SK-N-SH (cell line): ENCODE measurements at regions of chr3 and their contacts with region 1.

Region 1: DNA sequence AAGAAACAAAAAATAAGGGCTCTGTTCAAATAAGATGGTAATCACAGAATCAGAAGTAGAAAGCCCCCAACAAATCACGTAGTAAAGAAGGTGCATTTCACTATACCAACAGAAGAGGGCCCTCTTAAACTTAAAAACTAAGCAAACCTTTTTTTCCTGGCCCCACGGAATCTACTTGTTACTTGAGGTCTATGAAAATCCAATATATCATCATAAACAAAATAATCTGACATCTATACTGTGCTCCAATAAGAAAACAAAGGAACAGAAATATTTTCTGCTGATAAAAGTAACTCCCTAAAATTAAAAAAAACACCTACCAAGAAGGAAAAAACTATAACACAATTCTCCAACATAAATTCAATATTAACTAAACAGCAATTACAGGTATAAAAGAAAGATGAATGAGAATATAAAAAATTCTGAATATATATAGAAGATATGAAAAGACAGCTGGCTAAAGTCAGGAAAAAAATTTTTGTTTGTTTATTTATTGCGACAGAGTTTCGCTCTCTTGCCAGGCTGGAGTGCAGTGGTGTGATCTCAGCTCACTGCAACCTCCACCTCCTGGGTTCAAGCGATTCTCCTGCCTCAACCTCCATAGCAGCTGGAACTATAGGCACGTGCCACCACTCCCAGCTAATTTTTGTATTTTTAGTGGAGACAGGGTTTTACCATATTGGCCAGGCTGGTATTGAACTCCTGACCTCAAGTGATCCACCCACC is 81.8 kb downstream of the CLASP2 start:
- DNase-seq: peak; percentile 49
- H3K4me3 ChIP-seq: no peak overlapping the region
- H3K27ac ChIP-seq: no peak overlapping the region
- H3K4me1 ChIP-seq: no peaks in the 10 kb centered on the region
- H3K27me3 ChIP-seq: no peaks in the 10 kb centered on the region
- CTCF ChIP-seq: peak; percentile 83
- EP300 ChIP-seq: no peak
- RAD21 ChIP-seq: peak; percentile 89

Region 2: GRCh38 chr3:33299395-33300081 is 336.8 kb before region 1 on chr3:
- CTCF ChIA-PET with region 1: no interaction called
- POLR2A ChIA-PET with region 1: no interaction called
- DNase-seq: no peak
- H3K4me3 ChIP-seq: no peak overlapping the region
- H3K27ac ChIP-seq: peak overlapping the region; percentile 55 to 89; a peak in 3 of 4 replicates
- H3K4me1 ChIP-seq: peaks cover 0 to 11% of the 10 kb centered on the region in 2 experiments; a peak in 1 of 4 replicates
- H3K27me3 ChIP-seq: no peaks in the 10 kb centered on the region
- CTCF ChIP-seq: 0 out of 2 replicates have a peak, but pooled peaks have one; percentile 20
- EP300 ChIP-seq: 0 out of 4 replicates have a peak, but pooled peaks of 1 of the 2 experiments have one; percentile 6
- RAD21 ChIP-seq: no peak

Region 3: DNA sequence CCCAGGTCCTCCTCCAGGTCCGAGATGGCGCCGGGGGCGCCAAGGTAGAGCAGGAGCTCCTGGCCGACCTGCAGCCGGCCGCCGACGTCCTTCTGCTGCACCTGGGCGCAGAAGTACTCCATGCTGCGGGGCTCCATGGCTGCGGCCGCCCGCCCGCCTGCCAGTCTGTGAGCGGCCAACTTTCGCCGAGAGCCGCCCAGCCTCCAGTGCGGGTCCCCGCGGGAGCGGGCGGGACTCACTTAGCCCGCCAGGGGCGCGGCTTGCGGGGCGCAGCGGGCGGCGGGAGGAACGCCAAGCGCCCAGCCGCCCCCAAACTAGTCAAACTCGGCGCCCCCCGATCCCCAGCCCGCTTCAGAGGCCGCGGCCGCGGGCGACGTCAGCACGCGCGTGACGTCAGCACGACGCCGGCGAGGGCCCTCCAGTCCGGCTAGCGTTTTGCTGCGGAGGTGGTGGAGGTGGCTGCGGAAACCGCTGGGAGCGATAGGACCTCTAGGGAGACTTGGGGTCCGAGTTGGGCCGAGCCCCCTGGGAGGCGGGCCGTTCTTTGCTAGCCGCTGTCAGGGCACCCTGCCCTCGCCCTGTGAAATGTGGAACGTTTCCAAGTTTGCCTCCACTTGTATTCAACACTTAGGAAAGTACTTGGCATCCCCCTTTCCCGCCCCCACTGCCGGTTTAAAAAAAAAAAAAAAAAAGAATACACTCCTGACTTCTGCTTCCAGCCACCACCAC is 81.7 kb after region 1 on chr3 and contains the start of gene CLASP2:
- CTCF ChIA-PET with region 1: interaction called, 38 read pairs
- POLR2A ChIA-PET with region 1: no interaction called
- DNase-seq: peak; percentile 92
- H3K4me3 ChIP-seq: peak within 1 kb of the TSS; percentile 85 to 92
- H3K27ac ChIP-seq: peak within 1 kb of the TSS; percentile 74 to 82
- H3K4me1 ChIP-seq: peaks cover 8 to 11% of the 10 kb centered on the region in 2 experiments; a peak in 3 of 4 replicates
- H3K27me3 ChIP-seq: no peaks in the 10 kb centered on the region
- CTCF ChIP-seq: no peak
- EP300 ChIP-seq: peak in 1 of 2 experiments; percentile 18; a peak in 1 of 4 replicates
- RAD21 ChIP-seq: no peak
- polyA plus RNA-seq, gene CLASP2: 13.2 and 18.8 TPM in 2 replicates

Region 4: GRCh38 chr3:33773637-33774036 is 137.3 kb after region 1 on chr3:
- CTCF ChIA-PET with region 1: interaction called, 17 read pairs
- POLR2A ChIA-PET with region 1: no interaction called
- DNase-seq: no peak
- H3K4me3 ChIP-seq: no peak overlapping the region
- H3K27ac ChIP-seq: no peak overlapping the region
- H3K4me1 ChIP-seq: 0 out of 4 replicates have a peak, but pooled peaks cover 0 to 5% of the 10 kb centered on the region in 2 experiments
- H3K27me3 ChIP-seq: no peaks in the 10 kb centered on the region
- CTCF ChIP-seq: no peak
- EP300 ChIP-seq: no peak
- RAD21 ChIP-seq: no peak

Region 5: GRCh38 chr3:33787328-33788009 is 151.2 kb after region 1 on chr3:
- CTCF ChIA-PET with region 1: interaction called, 17 read pairs
- POLR2A ChIA-PET with region 1: no interaction called
- DNase-seq: peak; percentile 64
- H3K4me3 ChIP-seq: peak overlapping the region; percentile 39 to 55
- H3K27ac ChIP-seq: no peak overlapping the region
- H3K4me1 ChIP-seq: peaks cover 4 to 6% of the 10 kb centered on the region in 2 experiments; a peak in 2 of 4 replicates
- H3K27me3 ChIP-seq: no peaks in the 10 kb centered on the region
- CTCF ChIP-seq: peak; percentile 90
- EP300 ChIP-seq: no peak
- RAD21 ChIP-seq: peak; percentile 86